ENCODE measurements at regions of chr17 and their contacts with region 1.

Region 1: DNA sequence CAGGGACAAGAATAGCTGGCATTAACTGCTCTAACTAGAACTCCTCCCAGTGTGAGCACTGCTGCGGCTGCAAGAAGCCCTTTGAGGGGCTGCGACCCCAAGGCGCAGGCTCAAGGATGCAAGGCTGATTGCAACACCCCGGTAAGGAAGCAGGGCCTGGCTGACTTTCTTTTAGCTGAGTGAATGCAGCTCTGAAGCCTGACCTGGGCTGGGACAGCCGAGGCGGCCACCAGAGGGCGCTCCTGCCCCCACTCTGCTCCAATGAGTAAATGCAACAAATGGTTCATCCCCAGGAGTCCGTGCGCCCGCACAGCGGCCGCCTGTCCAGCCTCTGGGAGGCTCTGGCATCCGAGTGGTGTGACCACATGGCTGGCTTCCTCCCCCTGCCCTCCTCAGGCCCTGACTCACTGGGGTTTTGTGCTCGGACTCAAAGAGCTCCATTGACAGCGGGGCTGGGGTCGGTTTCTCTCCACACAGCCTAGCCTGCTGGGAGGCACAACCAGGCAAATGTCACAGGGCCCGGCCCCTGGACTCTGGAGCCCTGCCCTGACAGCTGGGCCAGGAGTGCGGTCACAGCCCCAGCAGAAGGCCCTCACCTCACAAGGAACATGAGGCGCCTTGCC is at the start of gene SMIM5:
- DNase-seq: peak; percentile 71
- H3K4me3 ChIP-seq: no peak within 1 kb of the TSS
- H3K27ac ChIP-seq: peak within 1 kb of the TSS; percentile 29
- H3K4me1 ChIP-seq: peaks cover 12% of the 10 kb centered on the region
- H3K27me3 ChIP-seq: no peaks in the 10 kb centered on the region
- CTCF ChIP-seq: peak; percentile 92 to 97
- POLR2A ChIP-seq: no peak
- total RNA-seq, gene SMIM5: not detected in 2 replicates

Region 2: GRCh38 chr17:75430159-75430974 is 202.6 kb before region 1 on chr17:
- CTCF ChIA-PET with region 1: interaction called, 7 read pairs
- POLR2A ChIA-PET with region 1: no interaction called
- dilution Hi-C with region 1: no loop called
- intact Hi-C with region 1: loop called (anchors 1 kb)
- DNase-seq: no peak
- H3K4me3 ChIP-seq: no peak overlapping the region
- H3K27ac ChIP-seq: no peak overlapping the region
- H3K4me1 ChIP-seq: peaks cover 3% of the 10 kb centered on the region
- H3K27me3 ChIP-seq: peaks cover 3 to 6% of the 10 kb centered on the region in 2 experiments
- CTCF ChIP-seq: no peak
- POLR2A ChIP-seq: no peak

Region 3: DNA sequence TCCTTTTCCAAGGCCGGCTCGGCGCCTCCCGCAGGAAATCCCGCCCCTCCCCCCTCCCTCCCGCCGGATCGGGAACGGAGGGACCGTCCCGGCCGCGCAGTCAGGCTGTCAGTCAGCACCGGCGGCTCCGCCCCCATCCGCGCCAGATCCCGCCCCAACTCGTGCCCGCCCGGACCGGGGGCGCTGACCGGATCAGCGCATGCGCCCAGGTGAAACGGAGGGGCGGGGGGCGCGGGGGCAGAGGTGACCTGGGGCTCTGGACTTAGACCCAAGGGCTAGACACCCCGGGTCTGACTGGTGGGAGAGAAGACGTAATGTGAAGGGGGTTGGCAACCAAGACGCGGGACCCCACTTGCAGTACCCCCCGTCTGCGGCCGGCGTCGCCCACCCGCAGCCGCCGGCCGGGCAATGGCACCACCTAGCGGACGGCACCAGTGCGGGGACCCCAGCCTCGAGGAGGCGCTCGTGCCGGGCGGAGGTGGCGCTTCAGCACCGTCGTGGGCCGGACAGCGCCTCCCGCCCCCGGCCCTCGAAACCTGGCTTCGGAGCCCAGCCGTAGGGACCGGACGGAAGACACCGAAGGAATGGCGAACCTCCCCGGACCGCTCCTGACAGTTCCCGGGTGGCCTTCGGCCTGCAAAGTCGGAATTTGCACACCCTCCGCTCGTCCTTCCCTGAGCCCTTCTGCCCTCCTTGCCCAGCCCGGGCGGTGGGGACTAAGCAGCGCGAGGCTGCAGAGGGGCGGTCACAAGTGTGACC is 117.3 kb before region 1 on chr17 and contains the start of gene CASKIN2:
- CTCF ChIA-PET with region 1: no interaction called
- POLR2A ChIA-PET with region 1: no interaction called
- dilution Hi-C with region 1: no loop called
- intact Hi-C with region 1: no loop called
- DNase-seq: peak; percentile 92
- H3K4me3 ChIP-seq: peak within 1 kb of the TSS; percentile 57 to 72 (median 70)
- H3K27ac ChIP-seq: peak within 1 kb of the TSS; percentile 59
- H3K4me1 ChIP-seq: peaks cover 46% of the 10 kb centered on the region
- H3K27me3 ChIP-seq: no peaks in the 10 kb centered on the region
- CTCF ChIP-seq: peak; percentile 100
- POLR2A ChIP-seq: no peak
- total RNA-seq, gene CASKIN2: 34.6 and 37.6 TPM in 2 replicates

Region 4: GRCh38 chr17:75619506-75620431 is 13.2 kb before region 1 on chr17:
- CTCF ChIA-PET with region 1: interaction called, 65 read pairs
- POLR2A ChIA-PET with region 1: no interaction called
- dilution Hi-C with region 1: no loop called
- intact Hi-C with region 1: no loop called
- DNase-seq: peak; percentile 32
- H3K4me3 ChIP-seq: no peak overlapping the region
- H3K27ac ChIP-seq: no peak overlapping the region
- H3K4me1 ChIP-seq: no peaks in the 10 kb centered on the region
- H3K27me3 ChIP-seq: no peaks in the 10 kb centered on the region
- CTCF ChIP-seq: peak; percentile 56 to 81
- POLR2A ChIP-seq: no peak

Region 5: DNA sequence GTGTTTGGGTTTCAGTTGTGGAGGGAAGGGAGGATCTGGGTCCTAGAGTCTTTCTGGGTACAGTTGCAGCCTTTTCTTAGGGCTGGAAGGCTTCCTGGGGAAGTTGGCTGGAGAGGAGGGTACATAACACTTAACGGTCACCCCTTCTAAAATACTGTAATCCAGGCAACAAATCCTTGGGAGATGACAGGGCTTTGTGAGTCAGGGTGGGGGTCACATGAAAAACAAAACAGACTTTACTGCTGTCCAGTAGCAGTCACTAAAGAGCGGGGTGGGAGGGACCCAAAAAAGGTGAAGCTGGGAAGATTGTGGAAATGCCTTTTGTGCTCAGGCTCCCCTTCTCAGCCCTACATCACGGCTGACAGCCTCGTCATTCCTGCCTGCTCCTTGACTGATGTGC is 40.5 kb after region 1 on chr17:
- CTCF ChIA-PET with region 1: interaction called, 41 read pairs
- POLR2A ChIA-PET with region 1: no interaction called
- dilution Hi-C with region 1: no loop called
- intact Hi-C with region 1: loop called (anchors 1 kb)
- DNase-seq: no peak
- H3K4me3 ChIP-seq: no peak overlapping the region
- H3K27ac ChIP-seq: no peak overlapping the region
- H3K4me1 ChIP-seq: peaks cover 14% of the 10 kb centered on the region
- H3K27me3 ChIP-seq: no peaks in the 10 kb centered on the region
- CTCF ChIP-seq: no peak
- POLR2A ChIP-seq: no peak

Region 6: GRCh38 chr17:75693500-75694481 is 60.8 kb after region 1 on chr17:
- CTCF ChIA-PET with region 1: interaction called, 18 read pairs
- POLR2A ChIA-PET with region 1: no interaction called
- dilution Hi-C with region 1: no loop called
- intact Hi-C with region 1: no loop called
- DNase-seq: peak; percentile 78
- H3K4me3 ChIP-seq: no peak overlapping the region
- H3K27ac ChIP-seq: peak overlapping the region; percentile 80
- H3K4me1 ChIP-seq: peaks cover 72% of the 10 kb centered on the region
- H3K27me3 ChIP-seq: no peaks in the 10 kb centered on the region
- CTCF ChIP-seq: peak; percentile 3 to 16
- POLR2A ChIP-seq: peak; percentile 63

Region 7: GRCh38 chr17:75731716-75732498 is 98.9 kb after region 1 on chr17:
- CTCF ChIA-PET with region 1: interaction called, 34 read pairs
- POLR2A ChIA-PET with region 1: no interaction called
- dilution Hi-C with region 1: no loop called
- intact Hi-C with region 1: no loop called
- DNase-seq: no peak
- H3K4me3 ChIP-seq: no peak overlapping the region
- H3K27ac ChIP-seq: no peak overlapping the region
- H3K4me1 ChIP-seq: no peaks in the 10 kb centered on the region
- H3K27me3 ChIP-seq: no peaks in the 10 kb centered on the region
- CTCF ChIP-seq: no peak
- POLR2A ChIP-seq: no peak

Measured in endothelial cell of umbilical vein (primary cell).